ENCODE measurements at regions of chr3 and their contacts with region 1.

Region 1: GRCh38 chr3:11770477-11771391 is 76.0 kb downstream of the TAMM41 start:
- DNase-seq: peak; percentile 89 to 96
- H3K4me3 ChIP-seq: peak overlapping the region; percentile 47
- H3K27ac ChIP-seq: peak overlapping the region; percentile 96
- H3K4me1 ChIP-seq: peaks cover 43% of the 10 kb centered on the region
- H3K27me3 ChIP-seq: no peaks in the 10 kb centered on the region
- CTCF ChIP-seq: no peak

Region 2: DNA sequence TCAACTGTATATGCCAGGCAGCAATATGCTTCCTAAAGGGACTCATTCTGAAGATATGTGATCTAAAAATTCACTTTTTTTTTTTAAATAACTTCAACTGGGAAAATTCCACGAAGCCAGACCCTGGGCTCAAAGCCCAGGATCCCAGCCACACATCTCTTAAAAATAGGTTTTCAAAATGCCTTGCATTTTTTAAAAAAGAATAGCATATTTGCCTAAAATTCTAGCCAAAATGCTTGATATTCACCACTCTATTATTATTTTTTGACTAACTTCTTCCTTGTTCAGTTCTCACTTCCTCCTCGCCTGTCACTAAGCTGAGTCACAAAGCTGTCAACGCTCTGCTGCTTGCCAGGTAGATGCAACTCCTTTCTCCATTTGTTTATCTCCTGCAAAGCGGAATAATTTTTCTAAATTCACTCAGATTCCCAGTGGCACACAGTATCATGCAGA is 99.1 kb before region 1 on chr3:
- CTCF ChIA-PET with region 1: no interaction called
- POLR2A ChIA-PET with region 1: no interaction called
- intact Hi-C with region 1: loop called (anchors 10 kb)
- DNase-seq: peak; percentile 34 to 78
- H3K4me3 ChIP-seq: no peak overlapping the region
- H3K27ac ChIP-seq: peak overlapping the region; percentile 63
- H3K4me1 ChIP-seq: peaks cover 16% of the 10 kb centered on the region
- H3K27me3 ChIP-seq: no peaks in the 10 kb centered on the region
- CTCF ChIP-seq: no peak

Region 3: DNA sequence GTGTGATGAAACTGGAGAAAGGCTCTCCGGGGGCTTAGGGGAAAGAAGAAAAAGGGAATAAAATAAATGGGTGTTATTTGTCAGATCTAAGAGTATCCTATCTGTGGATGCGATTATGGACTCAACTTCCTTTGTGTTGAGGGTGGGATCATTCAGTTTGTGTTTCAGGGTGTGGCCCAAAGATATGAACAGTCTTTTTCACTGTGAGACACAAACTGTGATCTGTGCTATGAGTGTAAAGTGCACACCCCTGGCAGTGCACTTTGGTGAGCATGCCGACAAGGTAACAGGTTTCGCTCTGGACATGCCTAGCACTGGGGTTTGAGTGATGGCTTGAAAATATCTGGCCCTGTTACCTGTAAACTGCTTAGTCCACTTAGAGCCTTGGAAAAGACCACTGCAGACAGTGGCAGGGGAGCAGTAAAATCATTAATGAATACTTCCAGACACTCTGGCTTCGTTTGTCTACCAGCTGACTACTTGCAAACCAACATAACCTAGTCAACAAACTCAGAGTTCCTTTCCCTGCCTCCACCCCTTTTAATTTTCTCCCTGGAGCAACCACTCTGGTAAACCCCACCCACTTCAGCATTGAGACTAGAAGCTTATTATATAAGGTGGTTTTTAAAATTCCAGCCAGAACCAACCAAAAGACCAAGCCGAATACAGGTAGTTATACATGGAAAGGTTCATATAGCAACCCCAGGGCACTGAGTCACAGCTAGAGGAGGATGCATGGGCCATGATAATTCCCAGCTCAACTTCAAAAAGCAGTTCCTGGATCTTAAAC is 20.8 kb after region 1 on chr3:
- CTCF ChIA-PET with region 1: no interaction called
- POLR2A ChIA-PET with region 1: no interaction called
- intact Hi-C with region 1: no loop called
- DNase-seq: no peak
- H3K4me3 ChIP-seq: no peak overlapping the region
- H3K27ac ChIP-seq: no peak overlapping the region
- H3K4me1 ChIP-seq: no peaks in the 10 kb centered on the region
- H3K27me3 ChIP-seq: no peaks in the 10 kb centered on the region
- CTCF ChIP-seq: no peak